ENCODE measurements at regions of chr12 and their contacts with region 1.

Region 1: DNA sequence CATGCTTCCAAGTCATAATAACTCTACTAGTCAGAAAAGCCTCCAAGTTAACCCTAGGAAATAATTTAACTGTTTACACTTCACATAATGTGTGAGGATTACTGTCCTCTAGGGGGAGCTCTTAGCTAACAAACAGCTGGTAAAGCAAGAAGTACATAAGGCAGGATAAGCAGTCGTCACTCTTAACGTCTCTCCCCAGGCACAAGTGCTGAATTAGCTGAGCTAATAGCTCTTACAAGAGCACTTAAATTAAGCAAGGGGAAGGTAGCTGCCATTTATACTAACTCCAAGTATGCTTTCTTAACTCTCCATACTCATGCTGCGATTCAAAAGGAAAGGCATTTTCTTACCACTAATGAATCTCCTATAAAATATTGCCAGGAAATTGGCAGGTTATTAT is 79.3 kb upstream of the TSPAN11 start:
- DNase-seq: peak; percentile 32
- H3K4me3 Mint-ChIP-seq: no peak overlapping the region
- H3K27ac Mint-ChIP-seq: no peak overlapping the region
- H3K4me1 Mint-ChIP-seq: peaks cover 4% of the 10 kb centered on the region
- H3K27me3 Mint-ChIP-seq: peaks cover 5% of the 10 kb centered on the region

Region 2: DNA sequence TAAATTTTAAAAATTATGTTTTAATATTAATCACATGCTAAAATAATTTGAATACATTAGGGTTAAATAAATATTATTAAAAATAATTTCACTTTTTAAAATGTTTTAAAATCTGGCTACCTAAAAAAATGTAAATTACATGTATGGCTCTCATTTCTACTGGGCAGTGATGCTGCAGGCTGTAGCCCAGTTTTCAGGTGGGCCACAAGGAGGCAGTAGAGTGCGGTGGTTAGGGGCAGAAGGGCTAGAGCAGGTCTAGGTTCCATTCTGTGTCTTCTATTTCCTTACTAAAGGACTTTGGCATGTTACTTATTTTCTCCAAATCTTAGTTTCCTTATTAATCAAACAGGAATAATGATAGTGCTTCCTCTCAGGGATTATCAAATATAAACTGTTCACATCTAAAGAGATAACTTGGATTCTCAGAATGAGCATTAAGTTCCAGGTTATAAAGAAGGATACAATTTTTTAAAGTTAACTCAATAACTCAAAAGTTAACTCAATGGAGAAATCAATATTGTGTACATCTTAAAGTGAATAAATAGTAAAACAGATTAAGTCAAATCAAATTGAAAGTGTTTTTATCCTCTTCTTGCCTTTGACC is 1294.8 kb before region 1 on chr12:
- CTCF ChIA-PET with region 1: interaction called, 5 read pairs
- intact Hi-C with region 1: loop called (anchors 10 kb)
- DNase-seq: peak; percentile 83
- H3K4me3 Mint-ChIP-seq: no peak overlapping the region
- H3K27ac Mint-ChIP-seq: no peak overlapping the region
- H3K4me1 Mint-ChIP-seq: no peaks in the 10 kb centered on the region
- H3K27me3 Mint-ChIP-seq: no peaks in the 10 kb centered on the region

Region 3: GRCh38 chr12:30985814-30986452 is 138.7 kb after region 1 on chr12:
- CTCF ChIA-PET with region 1: interaction called, 63 read pairs
- intact Hi-C with region 1: loop called (anchors 1 kb)
- DNase-seq: peak; percentile 37
- H3K4me3 Mint-ChIP-seq: no peak overlapping the region
- H3K27ac Mint-ChIP-seq: no peak overlapping the region
- H3K4me1 Mint-ChIP-seq: no peaks in the 10 kb centered on the region
- H3K27me3 Mint-ChIP-seq: no peaks in the 10 kb centered on the region

Region 4: DNA sequence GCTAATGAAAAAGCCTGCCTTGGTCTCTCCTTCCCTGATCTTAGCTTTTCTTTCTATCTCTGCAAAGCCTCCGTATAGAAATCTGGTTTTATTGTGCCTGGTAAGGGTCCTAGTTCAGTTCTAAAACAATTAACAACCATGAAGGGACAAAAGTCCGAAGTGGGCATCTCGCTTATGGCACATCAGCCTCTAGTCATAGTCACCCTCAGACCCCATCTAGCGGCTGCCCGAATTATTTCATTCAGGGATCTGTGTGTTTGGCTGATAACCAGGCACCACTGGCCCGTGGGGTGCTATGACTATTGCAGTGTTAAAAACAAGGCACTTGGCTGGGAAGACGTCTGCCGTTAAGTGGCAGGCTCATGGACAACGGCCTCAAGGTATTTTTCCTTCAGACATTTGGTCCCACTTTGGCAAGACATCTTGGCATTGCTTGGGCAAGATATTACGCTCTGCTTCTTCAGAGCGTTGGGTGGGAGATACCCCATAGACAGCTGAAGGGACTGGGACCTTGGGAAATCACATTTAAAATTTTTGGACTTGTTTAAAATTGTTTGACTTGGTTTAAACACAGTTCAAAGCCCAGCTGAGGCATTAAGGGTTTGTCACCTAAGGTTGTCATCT is 391.6 kb after region 1 on chr12:
- CTCF ChIA-PET with region 1: interaction called, 46 read pairs
- intact Hi-C with region 1: loop called (anchors 1 kb)
- DNase-seq: peak; percentile 90
- H3K4me3 Mint-ChIP-seq: no peak overlapping the region
- H3K27ac Mint-ChIP-seq: no peak overlapping the region
- H3K4me1 Mint-ChIP-seq: no peaks in the 10 kb centered on the region
- H3K27me3 Mint-ChIP-seq: peaks cover 21% of the 10 kb centered on the region

Region 5: DNA sequence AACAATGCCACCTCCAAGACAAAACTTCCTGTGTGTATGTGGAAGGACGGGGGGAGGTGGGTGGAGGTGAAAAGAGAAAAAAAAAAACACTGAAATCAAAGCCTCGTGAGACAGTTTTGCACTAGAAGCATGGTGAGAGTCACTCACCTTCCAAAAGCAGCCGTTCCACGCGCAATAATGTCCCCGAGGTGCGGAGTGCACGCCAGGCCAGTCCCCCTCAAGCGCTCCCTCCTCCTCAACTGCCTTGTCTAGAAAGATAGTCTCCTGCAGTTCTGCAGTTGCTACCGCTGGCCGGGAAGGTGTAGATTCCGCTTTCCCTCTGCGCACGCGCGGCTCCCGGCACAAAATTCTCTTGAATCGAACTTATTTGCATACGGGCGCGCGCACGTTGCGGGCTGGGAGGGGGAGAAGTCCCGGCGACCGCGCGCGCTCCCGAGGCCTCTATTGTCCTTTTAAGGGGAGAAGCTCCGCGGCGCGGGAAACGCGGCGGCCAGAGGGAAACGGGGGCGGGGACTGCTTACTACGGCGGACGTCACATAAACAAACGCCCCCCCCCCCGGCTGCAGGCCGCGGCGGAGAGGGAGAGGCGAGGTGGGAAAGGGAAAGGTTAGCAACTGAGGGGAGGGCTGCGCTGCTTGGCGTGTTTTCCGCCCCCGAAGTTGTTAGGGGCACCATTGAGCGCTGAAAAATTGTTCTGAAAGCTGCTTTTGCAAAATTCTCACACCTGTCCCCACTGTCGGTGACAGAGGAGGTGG is 478.8 kb after region 1 on chr12 and contains the start of gene SINHCAF:
- CTCF ChIA-PET with region 1: no interaction called
- intact Hi-C with region 1: loop called (anchors 1 kb)
- DNase-seq: peak; percentile 99
- H3K4me3 Mint-ChIP-seq: peak within 1 kb of the TSS; percentile 96
- H3K27ac Mint-ChIP-seq: peak within 1 kb of the TSS; percentile 99
- H3K4me1 Mint-ChIP-seq: peaks cover 20% of the 10 kb centered on the region
- H3K27me3 Mint-ChIP-seq: no peaks in the 10 kb centered on the region
- total RNA-seq, gene SINHCAF: 158 to 169 TPM